Left cardiac atrium (tissue), 4 donors: ENCODE measurements at regions of chr11 and their contacts with region 1.

Region 1: DNA sequence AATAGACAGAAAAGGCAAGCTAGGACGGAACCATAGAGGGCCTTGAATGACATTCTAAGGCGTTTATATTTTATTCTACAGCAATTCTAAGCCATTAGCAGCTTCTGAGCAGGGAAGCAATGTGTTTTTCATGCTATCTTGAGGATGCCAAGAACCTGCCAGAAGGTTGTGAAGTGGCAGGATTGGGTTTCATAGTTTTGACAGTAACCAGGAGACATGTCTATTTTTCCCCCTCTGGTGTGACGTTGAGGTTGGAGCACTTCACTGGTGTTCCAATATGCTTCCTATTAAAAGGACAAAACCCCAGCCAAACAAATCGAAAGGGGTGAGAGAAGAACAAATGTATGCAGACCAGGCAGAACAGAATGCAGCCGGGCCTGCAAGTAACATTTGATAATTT is 148.2 kb downstream of the SPATA19 start:
- DNase-seq: no peak
- ATAC-seq: peak; percentile 72 to 73

Region 2: GRCh38 chr11:133515072-133515471 is 182.1 kb before region 1 on chr11:
- intact Hi-C with region 1: loop called in 1 of 2 experiments (anchors 10 kb)
- DNase-seq: no peak
- ATAC-seq: no peak

Region 3: DNA sequence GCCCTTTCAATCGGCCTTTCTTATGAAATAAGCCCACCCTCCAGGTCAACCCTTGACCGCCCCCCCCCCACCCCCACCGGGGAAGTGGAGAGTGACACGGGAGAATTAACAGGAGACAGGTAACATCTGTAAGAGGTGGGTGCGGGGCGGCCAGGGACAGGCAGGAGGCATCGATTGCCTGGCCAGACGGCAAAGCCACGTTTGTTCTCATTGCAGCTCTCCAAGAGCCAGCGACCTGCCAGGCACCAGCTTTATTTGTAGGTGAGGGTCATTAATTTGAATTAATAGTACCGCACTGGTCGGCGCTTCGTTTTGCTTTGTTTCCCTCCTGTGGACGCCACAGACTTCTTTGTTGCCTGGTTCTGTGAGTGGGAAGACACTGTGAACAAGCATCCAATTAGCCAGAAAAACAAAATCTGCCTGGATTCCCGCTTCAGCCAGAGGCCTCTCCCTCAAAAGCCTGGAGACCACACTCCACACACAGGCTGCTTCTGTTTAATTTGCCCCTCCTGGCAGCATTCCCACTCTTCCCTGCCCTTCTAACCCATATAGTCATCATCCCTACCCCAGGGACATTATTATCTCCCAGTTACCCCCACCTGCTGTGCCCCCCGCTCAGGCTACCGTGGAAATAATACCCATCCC is 60.3 kb before region 1 on chr11:
- intact Hi-C with region 1: no loop called
- DNase-seq: no peak
- ATAC-seq: no peak

Region 4: GRCh38 chr11:133809569-133810491 is 112.7 kb after region 1 on chr11:
- intact Hi-C with region 1: loop called in 1 of 2 experiments (anchors 10 kb)
- DNase-seq: no peak
- ATAC-seq: peak in 1 of 2 donors; percentile 80